ENCODE measurements at regions of chr6 and their contacts with region 1.

Region 1: DNA sequence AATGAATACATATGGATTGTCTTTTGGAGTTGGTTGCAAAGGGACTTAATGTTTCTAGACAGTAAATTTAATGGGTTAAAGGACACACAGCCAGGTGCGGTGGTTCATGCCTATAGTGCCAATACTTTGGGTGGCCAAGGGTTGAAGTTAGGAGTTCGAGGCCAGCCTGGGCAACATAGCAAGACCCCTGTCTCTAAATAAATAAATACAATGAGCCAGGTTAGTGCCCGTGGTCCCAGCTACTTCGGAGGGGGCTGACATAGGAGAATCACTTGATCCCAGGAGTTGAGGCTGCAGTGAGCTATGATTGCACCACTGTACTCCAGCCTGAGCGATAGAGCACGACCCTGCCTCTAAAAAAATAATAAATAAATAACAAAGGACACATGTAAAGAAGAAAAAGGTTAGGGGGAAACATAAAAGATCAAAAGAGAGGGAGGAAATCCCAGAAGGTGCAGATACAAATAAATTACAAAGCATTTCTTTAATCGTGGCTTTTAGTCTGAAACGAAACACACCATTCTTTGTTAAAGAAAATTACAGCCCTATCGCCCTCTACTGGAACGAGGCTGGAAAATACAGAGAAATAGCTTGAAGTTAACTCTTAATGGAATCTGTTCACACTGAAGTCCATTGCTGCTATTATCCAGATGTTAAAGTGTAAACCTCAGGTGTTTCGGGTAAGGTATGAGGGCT is 42.6 kb upstream of the SCML4 start:
- DNase-seq: no peak
- H3K4me3 ChIP-seq: no peak overlapping the region
- CTCF ChIP-seq: peak; percentile 35

Region 2: GRCh38 chr6:107847844-107848802 is 18.6 kb before region 1 on chr6:
- CTCF ChIA-PET with region 1: interaction called, 37 read pairs
- POLR2A ChIA-PET with region 1: no interaction called
- DNase-seq: no peak
- H3K4me3 ChIP-seq: peak overlapping the region; percentile 66
- CTCF ChIP-seq: peak; percentile 97

Region 3: DNA sequence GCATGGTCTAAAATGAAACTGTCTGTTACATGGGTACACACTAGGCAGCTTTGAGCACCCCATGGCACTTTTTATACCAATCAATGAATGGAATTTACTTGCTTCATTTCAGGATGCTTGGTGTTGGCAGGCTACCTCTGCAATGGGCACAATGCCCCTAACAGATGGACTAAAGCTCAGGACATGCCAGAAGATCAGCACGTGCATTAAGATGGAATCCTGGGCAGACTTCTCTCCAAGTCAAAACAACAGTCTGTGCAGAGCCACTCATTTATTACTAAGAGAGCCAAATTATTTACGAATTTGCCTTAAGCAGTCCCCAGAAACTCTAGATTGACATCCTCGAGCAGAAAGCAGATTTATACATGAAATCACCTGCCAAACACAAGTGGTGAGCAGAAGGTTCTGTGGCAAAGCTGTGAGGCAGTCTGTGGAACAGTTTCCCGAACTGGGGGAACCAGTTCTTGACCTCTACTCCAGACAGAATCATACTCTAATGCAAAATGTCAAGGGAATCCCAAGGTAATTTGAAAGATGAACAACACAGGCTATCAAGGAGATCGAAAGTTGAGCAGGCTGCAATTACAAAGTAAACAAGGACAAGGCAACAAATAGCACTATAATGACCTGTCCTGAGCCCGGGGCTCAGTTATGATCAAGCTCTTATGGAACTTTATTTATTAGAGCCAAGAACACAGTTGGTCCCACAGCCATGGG is 13.3 kb after region 1 on chr6:
- CTCF ChIA-PET with region 1: interaction called, 15 read pairs
- POLR2A ChIA-PET with region 1: no interaction called
- DNase-seq: no peak
- H3K4me3 ChIP-seq: no peak overlapping the region
- CTCF ChIP-seq: no peak

Measured in AG04449 (cell line).